ENCODE measurements at regions of chr13 and their contacts with region 1.

Region 1: DNA sequence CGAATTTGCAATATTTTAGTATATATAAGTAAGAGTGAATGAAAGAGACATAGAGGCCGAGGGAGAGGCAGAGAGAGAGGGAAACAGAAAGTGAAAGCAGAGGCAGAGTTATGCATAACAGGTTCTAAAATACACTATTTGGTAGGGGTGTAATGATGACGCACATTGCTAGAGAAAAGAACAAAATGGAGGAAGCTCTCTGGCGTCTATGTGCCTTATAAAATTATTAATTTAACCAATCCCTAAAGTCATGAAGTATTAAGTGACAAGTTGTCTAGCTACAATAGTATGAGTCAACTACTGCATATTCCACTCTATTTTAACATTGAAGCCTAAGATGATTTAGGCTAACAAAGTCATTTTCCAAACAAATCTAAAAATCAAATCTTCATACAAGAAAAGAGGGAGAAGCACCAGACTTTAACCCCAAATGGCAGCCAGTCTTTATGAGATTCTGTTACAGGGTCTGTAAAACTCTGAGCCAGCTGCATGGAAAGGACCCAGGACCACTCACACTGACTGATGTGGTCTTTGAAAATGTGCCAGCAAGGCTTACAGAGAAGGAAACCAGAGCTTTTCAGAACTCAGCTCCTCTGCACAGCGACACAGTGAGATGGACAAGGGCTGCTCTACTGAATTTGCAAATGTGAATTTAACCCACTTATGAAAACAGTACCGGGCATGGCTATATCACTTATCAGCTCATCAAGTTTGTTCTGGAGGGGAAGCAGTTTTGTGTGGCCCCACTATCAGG is 99.0 kb upstream of the SERP2 start:
- DNase-seq: peak; percentile 85 to 93 (median 90)
- H3K4me3 ChIP-seq: peak overlapping the region in 5 of 7 experiments; percentile 21 to 64 (median 52)
- H3K27ac ChIP-seq: peak overlapping the region; percentile 59 to 76
- H3K4me1 ChIP-seq: peaks cover 11 to 48% (median 34%) of the 10 kb centered on the region in 4 experiments
- H3K27me3 ChIP-seq: no peaks in the 10 kb centered on the region

Region 2: GRCh38 chr13:44093607-44094564 is 180.7 kb before region 1 on chr13:
- CTCF ChIA-PET with region 1: no interaction called
- POLR2A ChIA-PET with region 1: no interaction called
- DNase-seq: no peak
- H3K4me3 ChIP-seq: no peak overlapping the region
- H3K27ac ChIP-seq: no peak overlapping the region
- H3K4me1 ChIP-seq: peaks cover 0 to 18% (median 6%) of the 10 kb centered on the region in 4 experiments
- H3K27me3 ChIP-seq: no peaks in the 10 kb centered on the region

Region 3: GRCh38 chr13:44287958-44288357 is 13.3 kb after region 1 on chr13:
- CTCF ChIA-PET with region 1: interaction called, 10 read pairs
- POLR2A ChIA-PET with region 1: no interaction called
- DNase-seq: no peak
- H3K4me3 ChIP-seq: no peak overlapping the region
- H3K27ac ChIP-seq: no peak overlapping the region
- H3K4me1 ChIP-seq: peaks cover 0 to 11% (median 8%) of the 10 kb centered on the region in 4 experiments
- H3K27me3 ChIP-seq: no peaks in the 10 kb centered on the region

Measured in common myeloid progenitor, CD34-positive (primary cell).